K562 (cell line): ENCODE measurements at regions of chr15 and their contacts with region 1.

Region 1: GRCh38 chr15:54353726-54354125 is 375.5 kb downstream of the UNC13C start:
- DNase-seq: no peak
- ATAC-seq: no peak
- H3K4me3 ChIP-seq: no peak overlapping the region
- H3K27ac ChIP-seq: no peak overlapping the region
- H3K4me1 ChIP-seq: no peaks in the 10 kb centered on the region
- H3K27me3 ChIP-seq: no peaks in the 10 kb centered on the region
- CTCF ChIP-seq: no peak
- EP300 ChIP-seq: no peak
- POLR2A ChIP-seq: no peak
- RAD21 ChIP-seq: no peak

Region 2: GRCh38 chr15:54289590-54290136 is 64.1 kb before region 1 on chr15:
- CTCF ChIA-PET with region 1: no interaction called
- POLR2A ChIA-PET with region 1: no interaction called
- in situ Hi-C with region 1: no loop called
- intact Hi-C with region 1: loop called (anchors 10 kb)
- DNase-seq: no peak
- ATAC-seq: no peak
- H3K4me3 ChIP-seq: no peak overlapping the region
- H3K27ac ChIP-seq: no peak overlapping the region
- H3K4me1 ChIP-seq: no peaks in the 10 kb centered on the region
- H3K27me3 ChIP-seq: no peaks in the 10 kb centered on the region
- CTCF ChIP-seq: no peak
- EP300 ChIP-seq: no peak
- POLR2A ChIP-seq: no peak
- RAD21 ChIP-seq: no peak

Region 3: DNA sequence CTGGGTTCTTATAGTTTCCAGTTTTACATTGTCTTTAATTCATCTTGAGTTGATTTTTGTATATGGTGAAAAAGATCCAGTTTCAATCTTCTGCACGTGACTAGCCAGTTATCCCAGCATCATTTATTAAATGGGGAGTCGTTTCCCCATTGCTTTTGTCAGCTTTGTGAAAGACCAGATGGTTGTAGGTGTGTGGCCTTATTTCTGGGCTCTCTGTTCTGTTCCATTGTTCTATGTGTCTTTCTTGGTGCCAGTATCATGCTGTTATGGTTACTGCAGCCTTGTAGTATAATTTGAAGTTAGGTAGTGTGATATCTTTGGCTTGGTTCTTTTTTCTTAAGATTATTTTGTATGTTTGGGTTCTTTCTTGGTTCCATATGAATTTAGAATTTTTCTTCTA is 56.8 kb after region 1 on chr15:
- CTCF ChIA-PET with region 1: no interaction called
- POLR2A ChIA-PET with region 1: no interaction called
- in situ Hi-C with region 1: no loop called
- intact Hi-C with region 1: no loop called
- DNase-seq: no peak
- ATAC-seq: no peak
- H3K4me3 ChIP-seq: no peak overlapping the region
- H3K27ac ChIP-seq: no peak overlapping the region
- H3K4me1 ChIP-seq: no peaks in the 10 kb centered on the region
- H3K27me3 ChIP-seq: no peaks in the 10 kb centered on the region
- CTCF ChIP-seq: no peak
- EP300 ChIP-seq: no peak
- POLR2A ChIP-seq: no peak
- RAD21 ChIP-seq: no peak